ENCODE measurements at regions of chr10 and their contacts with region 1.

Region 1: GRCh38 chr10:26527018-26527417 is 88.9 kb downstream of the APBB1IP start:
- DNase-seq: no peak
- CTCF ChIP-seq: no peak

Region 2: DNA sequence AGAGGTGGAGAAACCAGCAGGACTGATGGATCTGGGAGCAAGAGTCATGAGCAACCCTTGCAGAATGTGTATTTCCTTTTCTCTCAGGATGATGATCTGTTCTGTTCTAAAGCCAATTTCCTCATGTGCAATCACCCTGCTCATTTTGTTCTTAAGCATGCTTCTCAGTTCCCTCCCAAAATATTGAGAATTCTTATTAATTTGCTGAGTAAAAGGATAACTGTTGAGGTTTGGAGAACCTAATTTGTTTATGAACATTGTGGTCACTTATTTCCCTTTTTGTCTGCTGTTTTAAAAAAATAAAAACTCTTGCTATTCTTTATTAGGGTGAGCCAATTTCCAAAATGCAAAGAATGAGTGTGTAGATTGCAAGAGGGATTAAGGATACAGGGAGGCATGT is 17.9 kb after region 1 on chr10:
- CTCF ChIA-PET with region 1: interaction called, 7 read pairs
- POLR2A ChIA-PET with region 1: interaction called, 10 read pairs
- DNase-seq: no peak
- CTCF ChIP-seq: no peak

Region 3: DNA sequence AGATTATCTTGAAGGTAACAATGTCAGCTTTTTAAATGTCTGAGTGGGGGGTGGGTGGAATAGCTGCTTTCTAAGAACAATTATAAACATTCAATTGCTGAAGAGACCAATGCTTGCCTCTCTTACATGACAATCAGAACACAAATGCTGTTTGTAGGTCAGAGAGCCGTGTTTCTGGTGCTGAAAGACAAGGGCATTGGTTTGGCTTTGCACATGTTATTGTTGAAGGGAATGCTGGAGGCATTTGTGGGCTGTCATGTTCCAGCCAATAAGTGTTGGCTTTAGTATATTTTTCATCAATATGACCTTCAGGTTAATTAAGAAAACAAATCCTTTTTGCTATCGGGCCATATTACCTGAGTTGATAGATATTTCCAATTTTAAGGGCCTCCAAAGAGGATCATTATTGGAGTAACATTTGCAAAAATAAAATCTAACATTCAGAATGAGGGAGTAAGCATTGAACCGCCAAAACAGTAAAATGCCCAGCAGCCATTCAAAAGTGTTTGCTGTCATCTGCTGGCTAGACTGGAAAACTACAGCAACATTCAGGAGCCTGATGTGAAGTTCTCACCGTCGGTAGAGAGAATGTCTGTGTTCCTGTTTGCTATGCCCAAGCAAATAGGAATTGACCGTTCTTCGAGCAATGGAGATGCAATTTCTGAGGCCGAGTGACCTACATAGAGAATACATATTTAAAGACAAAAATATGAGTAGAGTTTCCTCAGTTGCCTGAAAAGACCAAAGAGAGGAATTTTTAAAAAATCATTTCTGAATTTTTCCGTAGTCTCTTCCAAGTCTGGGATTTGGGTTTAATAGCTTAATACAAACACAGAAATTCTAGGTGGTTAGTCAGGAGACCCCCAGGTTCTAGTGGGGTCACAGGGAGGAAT is 30.0 kb after region 1 on chr10:
- CTCF ChIA-PET with region 1: no interaction called
- POLR2A ChIA-PET with region 1: no interaction called
- DNase-seq: peak; percentile 55
- CTCF ChIP-seq: peak; percentile 84

Measured in GM10248 (cell line).